A549 (cell line): ENCODE measurements at regions of chr5 and their contacts with region 1.

Region 1: DNA sequence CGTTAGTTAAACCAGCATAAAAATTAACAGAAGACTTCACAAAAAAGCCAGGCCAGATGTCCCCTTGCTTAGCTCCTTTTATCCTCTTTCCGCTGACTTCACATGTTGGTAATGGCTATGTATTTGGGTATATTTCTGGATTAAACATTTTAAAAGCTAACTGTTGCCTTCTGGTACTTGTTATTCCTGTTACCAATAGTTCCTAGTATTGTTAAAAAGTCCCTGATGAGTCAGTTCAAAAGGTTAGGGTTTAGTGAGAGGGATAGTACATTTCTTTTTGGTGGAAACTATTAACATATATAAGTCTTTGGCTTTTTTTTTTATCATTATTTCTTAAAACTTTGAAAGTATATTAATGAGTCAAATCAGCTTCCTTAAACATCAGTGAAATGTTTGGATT is 103.2 kb upstream of the ELL2 start:
- DNase-seq: no peak
- ATAC-seq: no peak
- H3K4me3 ChIP-seq: no peak overlapping the region
- H3K27ac ChIP-seq: no peak overlapping the region
- H3K4me1 ChIP-seq: peaks cover 39% of the 10 kb centered on the region
- CTCF ChIP-seq: no peak
- EP300 ChIP-seq: no peak
- POLR2A ChIP-seq: no peak
- RAD21 ChIP-seq: no peak

Region 2: DNA sequence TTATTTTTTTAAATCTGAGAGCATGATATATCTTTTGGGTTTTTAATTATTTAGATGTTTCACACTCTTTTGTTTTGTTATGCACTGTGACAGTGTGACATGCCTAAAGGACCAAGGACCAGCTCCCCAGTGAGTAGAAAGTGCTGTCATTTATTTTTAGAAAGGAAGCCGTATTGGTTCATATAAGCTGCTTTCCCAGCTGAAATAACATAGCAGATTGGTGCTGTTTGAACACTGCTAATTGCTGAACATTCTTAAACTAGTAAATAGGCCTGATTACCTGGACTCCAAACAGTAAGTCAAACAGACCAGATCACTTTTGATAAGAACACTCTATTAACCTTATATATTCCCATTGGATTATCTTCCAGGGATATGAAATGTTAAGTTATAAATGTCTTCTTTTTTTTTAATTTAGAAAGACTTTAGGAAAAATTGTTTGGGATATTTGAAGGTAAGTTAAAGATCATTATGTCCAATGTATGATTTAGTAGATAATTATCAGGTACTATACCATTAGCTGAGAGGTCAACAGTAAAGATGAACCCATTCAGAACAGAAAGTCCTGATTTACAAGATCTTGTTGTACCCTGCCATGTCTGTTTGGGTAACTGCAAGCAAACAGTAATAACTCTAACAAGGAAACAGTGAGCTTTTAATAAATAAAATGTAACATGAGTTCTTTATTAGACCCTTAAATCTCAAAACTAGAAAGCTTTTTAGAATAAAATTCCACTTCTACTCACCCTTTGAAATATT is 75.4 kb before region 1 on chr5:
- CTCF ChIA-PET with region 1: no interaction called
- POLR2A ChIA-PET with region 1: no interaction called
- DNase-seq: no peak
- ATAC-seq: no peak
- H3K4me3 ChIP-seq: no peak overlapping the region
- H3K27ac ChIP-seq: no peak overlapping the region
- H3K4me1 ChIP-seq: peaks cover 13% of the 10 kb centered on the region
- CTCF ChIP-seq: no peak
- EP300 ChIP-seq: no peak
- POLR2A ChIP-seq: no peak
- RAD21 ChIP-seq: no peak

Region 3: GRCh38 chr5:96054311-96055030 is 10.4 kb before region 1 on chr5:
- CTCF ChIA-PET with region 1: interaction called, 15 read pairs
- POLR2A ChIA-PET with region 1: no interaction called
- DNase-seq: no peak
- ATAC-seq: no peak
- H3K4me3 ChIP-seq: no peak overlapping the region
- H3K27ac ChIP-seq: no peak overlapping the region
- H3K4me1 ChIP-seq: peaks cover 9% of the 10 kb centered on the region; the same call in 2 of the 3 replicates
- CTCF ChIP-seq: no peak
- EP300 ChIP-seq: no peak
- POLR2A ChIP-seq: no peak
- RAD21 ChIP-seq: no peak